Right ventricle myocardium inferior (tissue), 1 donor: ENCODE measurements at regions of chr4 and their contacts with region 1.

Region 1: GRCh38 chr4:2418650-2419571 is at the start of gene CFAP99:
- DNase-seq: peak; percentile 99
- ATAC-seq: peak; percentile 97
- total RNA-seq, gene CFAP99: not detected

Region 2: GRCh38 chr4:2177443-2178093 is 241.3 kb before region 1 on chr4:
- intact Hi-C with region 1: no loop called
- DNase-seq: no peak
- ATAC-seq: no peak

Region 3: DNA sequence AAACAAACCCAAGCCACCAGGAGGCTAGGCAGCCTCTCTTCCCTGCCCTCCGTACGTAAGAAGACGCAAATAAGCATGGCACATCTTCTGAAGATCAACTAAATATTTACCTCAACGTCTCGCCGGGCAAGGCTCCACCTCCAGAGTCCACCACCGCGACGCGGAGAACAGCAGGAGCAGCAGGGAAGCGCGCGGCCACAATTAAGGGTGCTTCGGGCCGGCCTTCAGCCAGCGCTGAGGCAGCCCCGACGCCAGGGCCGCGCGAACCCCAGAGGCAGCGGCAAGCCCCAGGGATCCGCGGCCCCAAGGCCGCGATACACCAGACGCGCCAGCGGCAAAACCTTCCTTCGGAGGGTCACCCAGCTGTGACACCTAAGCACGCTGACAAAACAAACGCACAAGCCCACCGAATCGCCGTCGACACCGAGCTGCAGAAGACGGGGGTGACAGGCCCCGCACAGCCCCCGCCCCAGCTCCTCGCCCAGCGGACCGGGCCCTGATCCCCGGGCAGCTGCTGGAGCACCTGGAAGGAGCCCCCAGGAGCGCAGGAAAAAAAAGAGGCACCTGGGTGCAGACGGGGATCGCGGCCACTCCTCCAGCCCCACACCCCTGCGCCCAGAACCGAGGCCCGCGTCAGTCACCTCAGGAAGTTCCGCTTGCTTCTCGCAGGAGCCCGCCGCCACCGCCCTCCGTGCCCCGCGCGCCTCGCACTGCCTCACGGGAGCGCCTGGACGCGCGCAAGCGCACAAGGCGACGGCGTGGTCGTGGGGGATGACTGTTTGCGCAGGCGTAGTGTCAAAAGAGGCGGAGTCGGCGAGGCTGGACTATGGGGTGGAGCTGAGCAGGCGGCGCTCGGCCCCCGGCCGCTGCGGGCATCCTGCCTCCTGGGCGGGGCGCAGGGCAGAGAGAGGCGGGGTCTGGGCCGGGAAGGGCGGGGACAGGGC is 177.2 kb before region 1 on chr4 and contains the starts of genes HAUS3 and POLN:
- intact Hi-C with region 1: loop called (anchors 5 kb)
- DNase-seq: peak; percentile 99
- ATAC-seq: peak; percentile 98
- total RNA-seq, gene HAUS3: 7.7 TPM
- total RNA-seq, gene POLN: 2.0 TPM

Region 4: DNA sequence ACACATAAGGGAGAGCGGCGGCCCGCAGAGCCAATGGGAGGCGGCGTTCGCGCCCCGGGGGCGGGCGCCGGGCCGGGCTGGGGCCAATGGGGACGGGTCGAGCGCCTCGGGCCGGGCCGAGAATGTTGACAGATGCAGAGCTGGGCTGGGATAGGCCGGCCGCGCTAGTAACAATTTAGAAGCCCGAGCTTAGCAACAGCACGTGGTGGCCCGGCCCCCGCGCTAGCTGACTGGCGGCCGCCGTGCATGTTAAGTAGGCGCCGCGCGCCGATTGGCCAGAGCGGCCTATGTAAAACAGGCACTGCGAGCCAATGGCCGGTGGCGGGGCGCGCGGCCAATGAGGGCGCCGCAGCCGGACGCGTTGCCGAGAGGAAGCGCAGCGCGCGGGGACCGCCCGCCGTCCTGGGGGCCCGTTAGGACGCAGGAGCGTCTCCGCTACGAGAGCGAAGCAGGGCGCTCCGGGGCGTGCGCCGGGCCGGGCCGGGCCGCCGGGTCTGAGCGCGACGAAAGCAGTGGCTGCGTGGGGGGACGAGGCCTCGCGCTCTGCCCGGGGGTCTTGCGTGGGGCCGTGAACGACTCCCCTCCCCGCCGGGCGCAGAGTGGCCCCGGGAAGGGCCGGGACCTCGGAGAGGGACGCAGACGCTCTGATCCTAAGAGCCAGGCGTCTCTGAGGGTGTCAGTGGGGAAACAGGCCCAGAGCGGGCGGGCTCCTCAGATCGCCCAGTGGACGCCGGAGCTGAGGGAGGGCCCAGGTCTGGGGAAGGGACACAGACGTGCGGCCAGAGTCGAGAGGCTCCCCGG is 156.6 kb before region 1 on chr4:
- intact Hi-C with region 1: loop called (anchors 1 kb)
- DNase-seq: peak; percentile 100
- ATAC-seq: peak; percentile 96

Region 5: GRCh38 chr4:2468445-2469192 is 49.7 kb after region 1 on chr4 and contains the start of gene RNF4:
- intact Hi-C with region 1: loop called (anchors 2 kb)
- DNase-seq: peak; percentile 98
- ATAC-seq: peak; percentile 96
- total RNA-seq, gene RNF4: 27.2 TPM

Region 6: GRCh38 chr4:2963175-2963965 is 544.5 kb after region 1 on chr4 and contains the starts of genes GRK4 and NOP14:
- intact Hi-C with region 1: loop called (anchors 5 kb)
- DNase-seq: peak; percentile 100
- ATAC-seq: peak; percentile 98
- total RNA-seq, gene GRK4: 7.7 TPM
- total RNA-seq, gene NOP14: 18.3 TPM